ENCODE measurements at regions of chr14 and their contacts with region 1.

Region 1: DNA sequence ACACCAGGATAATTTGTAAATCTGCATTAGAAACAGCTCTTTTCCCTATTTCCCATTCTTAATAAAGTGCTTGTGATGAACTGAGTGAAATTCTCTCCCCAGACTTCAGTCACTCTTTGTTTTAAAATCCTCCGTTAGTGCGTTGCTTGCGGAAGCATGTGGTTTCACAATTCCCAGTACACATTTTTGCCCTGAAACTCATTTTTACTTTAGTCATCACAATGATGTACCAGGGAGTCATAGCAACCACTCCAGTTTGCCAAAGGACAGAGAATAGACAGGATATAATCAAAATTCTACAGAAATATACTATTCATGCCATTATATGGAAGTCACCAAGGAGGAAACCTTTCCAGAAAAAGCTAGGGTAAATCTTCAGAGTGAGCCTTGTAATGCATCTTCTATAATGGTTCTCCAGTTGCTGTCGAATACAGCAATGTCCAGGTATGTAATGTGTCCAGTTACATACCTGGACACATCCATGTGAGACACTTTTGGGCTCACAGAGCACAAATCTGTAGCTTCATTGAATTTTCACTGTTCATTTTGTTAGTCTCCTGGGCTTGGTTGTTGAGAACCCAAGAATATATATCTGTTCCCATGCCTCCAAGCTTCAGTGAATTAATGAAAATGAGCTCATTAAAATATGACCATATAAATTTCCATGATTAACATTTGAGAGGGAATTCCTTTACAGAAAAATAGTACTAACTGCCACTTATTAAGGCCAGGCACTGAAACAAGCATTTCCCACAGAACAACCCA is 57.8 kb downstream of the GPR135 start:
- DNase-seq: peak; percentile 84
- H3K4me3 ChIP-seq: peak overlapping the region in 1 of 3 experiments; percentile 12
- H3K27ac ChIP-seq: peak overlapping the region; percentile 92
- H3K4me1 ChIP-seq: peaks cover 21% of the 10 kb centered on the region
- H3K27me3 ChIP-seq: no peaks in the 10 kb centered on the region
- CTCF ChIP-seq: no peak
- POLR2A ChIP-seq: no peak

Region 2: DNA sequence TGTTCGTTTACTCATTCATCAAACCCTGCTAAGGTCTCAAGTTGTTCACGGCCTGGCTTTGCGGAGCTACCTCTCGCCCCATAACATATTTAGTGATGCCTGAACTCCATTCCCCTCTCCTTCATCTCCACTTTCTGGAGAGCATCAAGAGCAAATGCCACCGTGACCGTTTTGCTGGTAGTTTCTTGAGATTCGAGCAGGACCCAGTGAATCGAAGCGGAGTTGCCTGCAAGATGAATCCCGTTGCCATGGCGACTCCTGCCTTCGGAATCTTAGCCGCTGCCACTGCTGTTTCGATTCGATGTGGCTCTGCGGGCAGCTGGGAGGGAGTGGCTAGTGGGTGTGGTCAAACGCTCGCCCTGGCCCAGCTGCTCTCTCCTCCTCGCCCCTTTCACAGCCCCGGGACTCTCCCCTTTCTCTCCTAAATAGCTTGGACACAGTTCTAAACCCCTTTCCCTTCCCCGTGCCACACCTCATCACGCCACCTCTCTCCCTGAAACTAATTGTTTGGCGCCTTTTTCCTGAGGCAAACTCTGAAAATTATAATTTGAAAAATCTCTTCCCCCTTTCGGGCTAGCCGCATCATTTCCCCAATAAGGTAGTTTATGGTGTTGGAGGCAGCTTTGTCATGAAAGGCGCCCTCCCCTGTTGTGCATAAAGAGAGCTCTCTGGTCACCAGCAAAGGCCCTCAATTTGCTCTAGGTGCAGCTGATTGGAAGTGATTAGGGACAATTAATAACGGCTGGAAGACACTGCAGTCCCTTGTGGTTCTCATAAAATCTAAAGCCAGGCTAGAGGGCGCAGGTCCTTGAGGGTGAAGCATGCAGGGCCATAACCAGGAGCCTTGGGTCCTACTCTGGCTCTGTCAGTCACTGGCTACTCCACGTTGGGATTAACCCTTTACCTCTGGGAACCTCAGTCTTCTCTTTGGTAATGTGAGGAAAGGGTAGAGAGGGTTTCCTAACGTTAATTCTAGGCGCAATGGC is 217.3 kb before region 1 on chr14:
- CTCF ChIA-PET with region 1: interaction called, 3 read pairs
- POLR2A ChIA-PET with region 1: no interaction called
- dilution Hi-C with region 1: no loop called
- intact Hi-C with region 1: loop called (anchors 1 kb)
- DNase-seq: peak; percentile 80
- H3K4me3 ChIP-seq: peak overlapping the region; percentile 77 to 85 (median 78)
- H3K27ac ChIP-seq: peak overlapping the region; percentile 72
- H3K4me1 ChIP-seq: peaks cover 13% of the 10 kb centered on the region
- H3K27me3 ChIP-seq: peaks cover 11 to 24% of the 10 kb centered on the region in 2 experiments
- CTCF ChIP-seq: no peak
- POLR2A ChIP-seq: no peak

Region 3: DNA sequence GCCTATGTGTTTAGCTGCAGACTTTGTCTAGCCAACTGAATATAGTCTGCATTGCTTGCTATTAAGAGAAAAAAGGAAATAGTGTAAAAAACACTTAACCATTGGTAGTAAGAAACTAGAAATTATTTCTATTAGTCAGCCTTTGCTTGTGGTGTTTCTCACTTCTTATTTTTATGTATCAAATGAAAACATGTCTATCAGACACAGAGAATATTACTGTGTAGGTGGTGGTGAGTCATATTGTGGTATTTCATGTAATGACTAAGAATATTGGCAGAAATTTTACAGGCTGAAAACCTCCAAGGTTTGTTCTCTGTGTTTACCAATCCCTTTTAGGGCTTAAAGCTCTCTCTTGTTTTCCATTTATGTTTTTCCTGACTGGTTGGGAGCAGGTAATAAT is 131.8 kb before region 1 on chr14:
- CTCF ChIA-PET with region 1: no interaction called
- POLR2A ChIA-PET with region 1: no interaction called
- dilution Hi-C with region 1: no loop called
- intact Hi-C with region 1: loop called (anchors 5 kb)
- DNase-seq: peak; percentile 89
- H3K4me3 ChIP-seq: no peak overlapping the region
- H3K27ac ChIP-seq: peak overlapping the region; percentile 60
- H3K4me1 ChIP-seq: peaks cover 43% of the 10 kb centered on the region
- H3K27me3 ChIP-seq: no peaks in the 10 kb centered on the region
- CTCF ChIP-seq: no peak
- POLR2A ChIP-seq: no peak

Region 4: DNA sequence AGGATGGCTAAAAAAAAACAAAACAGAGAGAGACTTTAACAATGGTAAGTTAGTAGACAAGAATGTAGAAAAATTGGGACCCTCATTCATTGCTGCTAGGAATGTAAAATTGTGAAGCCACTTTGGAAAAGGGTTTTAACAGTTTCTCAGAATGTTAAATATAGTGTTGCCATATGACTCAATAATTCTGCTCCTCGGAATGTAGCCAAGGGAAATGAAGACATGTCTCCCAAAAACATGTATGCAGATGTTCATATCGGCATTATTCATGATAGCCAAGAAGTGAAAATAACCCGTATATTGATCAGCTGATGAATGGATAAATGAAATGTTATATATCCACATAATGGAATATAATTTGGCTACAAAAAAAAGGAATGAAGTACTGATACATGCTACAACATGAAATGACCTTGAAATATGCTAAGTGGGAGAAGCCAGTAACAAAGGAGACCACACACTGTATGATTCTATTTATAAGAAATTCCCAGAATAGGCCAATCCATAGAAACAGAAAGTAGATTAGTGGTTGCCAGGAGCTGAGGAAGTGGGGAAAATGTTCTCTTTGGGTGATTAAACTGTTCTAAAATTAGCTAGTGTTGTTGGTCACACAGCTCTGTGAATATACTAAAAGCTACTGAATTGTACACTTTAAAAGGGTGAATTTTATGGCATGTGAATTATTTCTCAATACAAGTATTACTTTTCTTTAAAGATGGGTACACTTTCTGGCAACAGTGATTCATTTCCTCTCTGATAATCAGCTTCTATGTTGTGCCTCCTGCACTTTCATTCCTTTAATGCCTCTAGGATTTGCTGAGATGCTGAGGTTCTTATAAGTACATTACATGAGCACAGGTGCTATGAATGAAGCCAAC is 86.4 kb before region 1 on chr14:
- CTCF ChIA-PET with region 1: no interaction called
- POLR2A ChIA-PET with region 1: no interaction called
- dilution Hi-C with region 1: no loop called
- intact Hi-C with region 1: loop called (anchors 1 kb)
- DNase-seq: peak; percentile 90
- H3K4me3 ChIP-seq: peak overlapping the region in 1 of 3 experiments; percentile 23
- H3K27ac ChIP-seq: peak overlapping the region; percentile 84
- H3K4me1 ChIP-seq: peaks cover 21% of the 10 kb centered on the region
- H3K27me3 ChIP-seq: no peaks in the 10 kb centered on the region
- CTCF ChIP-seq: no peak
- POLR2A ChIP-seq: peak; percentile 29

Region 5: GRCh38 chr14:59337141-59337611 is 70.3 kb before region 1 on chr14:
- CTCF ChIA-PET with region 1: interaction called, 3 read pairs
- POLR2A ChIA-PET with region 1: no interaction called
- dilution Hi-C with region 1: no loop called
- intact Hi-C with region 1: loop called (anchors 1 kb)
- DNase-seq: peak; percentile 70
- H3K4me3 ChIP-seq: no peak overlapping the region
- H3K27ac ChIP-seq: peak overlapping the region; percentile 87
- H3K4me1 ChIP-seq: peaks cover 61% of the 10 kb centered on the region
- H3K27me3 ChIP-seq: no peaks in the 10 kb centered on the region
- CTCF ChIP-seq: no peak
- POLR2A ChIP-seq: no peak

Region 6: DNA sequence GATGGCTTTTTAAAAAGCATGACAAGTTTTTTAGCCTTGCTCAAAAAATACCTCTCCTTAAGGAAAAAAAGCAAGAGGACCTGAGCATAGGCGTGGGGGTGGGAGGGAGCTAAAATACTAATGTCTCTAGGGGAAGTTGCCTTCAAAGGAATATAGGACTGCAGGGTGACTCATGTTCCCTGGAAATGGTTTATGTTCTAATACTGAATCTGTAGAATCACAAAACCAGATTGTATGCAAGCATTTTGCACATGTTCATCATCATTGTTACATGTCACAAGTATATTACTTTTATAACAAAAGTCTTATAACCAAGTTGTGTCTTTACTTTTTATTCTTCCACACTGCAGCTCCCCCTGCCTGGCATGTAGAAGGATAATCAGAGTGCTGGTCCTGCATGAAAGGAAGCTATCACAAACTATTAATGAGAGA is 21.2 kb after region 1 on chr14:
- CTCF ChIA-PET with region 1: interaction called, 14 read pairs
- POLR2A ChIA-PET with region 1: no interaction called
- dilution Hi-C with region 1: no loop called
- intact Hi-C with region 1: no loop called
- DNase-seq: peak; percentile 53
- H3K4me3 ChIP-seq: no peak overlapping the region
- H3K27ac ChIP-seq: no peak overlapping the region
- H3K4me1 ChIP-seq: peaks cover 11% of the 10 kb centered on the region
- H3K27me3 ChIP-seq: no peaks in the 10 kb centered on the region
- CTCF ChIP-seq: peak; percentile 8 to 9
- POLR2A ChIP-seq: no peak